A673 (cell line): ENCODE measurements at regions of chr20 and their contacts with region 1.

Region 1: GRCh38 chr20:10673988-10674711 is at the start of gene JAG1:
- DNase-seq: peak; percentile 94
- H3K4me3 ChIP-seq: peak within 1 kb of the TSS; percentile 59
- H3K27ac ChIP-seq: peak within 1 kb of the TSS; percentile 75
- H3K4me1 ChIP-seq: peaks cover 33% of the 10 kb centered on the region
- H3K27me3 ChIP-seq: no peaks in the 10 kb centered on the region
- CTCF ChIP-seq: no peak
- total RNA-seq, gene JAG1: 42.9 and 57.5 TPM in 2 replicates

Region 2: GRCh38 chr20:10357974-10358373 is 316.2 kb before region 1 on chr20:
- CTCF ChIA-PET with region 1: no interaction called
- POLR2A ChIA-PET with region 1: no interaction called
- intact Hi-C with region 1: loop called (anchors 5 kb)
- DNase-seq: peak; percentile 28
- H3K4me3 ChIP-seq: no peak overlapping the region
- H3K27ac ChIP-seq: no peak overlapping the region
- H3K4me1 ChIP-seq: peaks cover 8% of the 10 kb centered on the region
- H3K27me3 ChIP-seq: no peaks in the 10 kb centered on the region
- CTCF ChIP-seq: peak; percentile 73

Region 3: DNA sequence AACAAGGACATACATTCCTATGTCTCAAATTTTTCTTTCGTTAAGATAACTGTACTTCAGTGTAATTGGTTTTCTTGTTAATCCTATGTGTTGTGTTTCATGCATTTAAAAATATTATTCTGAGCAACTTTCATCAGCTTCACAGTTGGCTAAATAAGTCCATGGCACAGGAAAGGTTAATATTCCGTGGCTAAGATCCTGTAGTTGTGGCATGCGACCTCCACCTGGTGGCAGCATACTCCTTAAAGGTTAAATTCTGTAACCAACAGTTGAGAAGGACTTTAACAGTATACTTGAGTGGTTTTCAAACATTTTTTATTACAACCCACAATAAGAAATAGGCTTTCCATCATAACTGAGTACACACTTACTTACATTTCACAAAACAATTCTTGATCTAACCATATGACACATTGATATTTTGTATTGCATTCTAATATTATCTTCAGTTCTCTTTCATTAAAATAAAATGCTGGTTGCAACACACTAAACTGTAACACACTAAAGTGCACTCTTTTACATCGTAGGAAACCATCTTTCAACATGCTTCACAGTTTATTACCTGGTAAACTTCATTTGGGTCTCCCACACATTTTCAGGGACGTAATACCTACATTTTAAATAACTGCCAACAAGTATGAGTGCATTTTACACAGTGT is 120.7 kb before region 1 on chr20:
- CTCF ChIA-PET with region 1: interaction called, 4 read pairs
- POLR2A ChIA-PET with region 1: no interaction called
- intact Hi-C with region 1: loop called (anchors 2 kb)
- DNase-seq: peak; percentile 86
- H3K4me3 ChIP-seq: no peak overlapping the region
- H3K27ac ChIP-seq: no peak overlapping the region
- H3K4me1 ChIP-seq: peaks cover 28% of the 10 kb centered on the region
- H3K27me3 ChIP-seq: no peaks in the 10 kb centered on the region
- CTCF ChIP-seq: peak; percentile 89

Region 4: GRCh38 chr20:11108102-11108810 is 434.1 kb after region 1 on chr20:
- CTCF ChIA-PET with region 1: interaction called, 11 read pairs
- POLR2A ChIA-PET with region 1: no interaction called
- intact Hi-C with region 1: no loop called
- DNase-seq: no peak
- H3K4me3 ChIP-seq: no peak overlapping the region
- H3K27ac ChIP-seq: no peak overlapping the region
- H3K4me1 ChIP-seq: no peaks in the 10 kb centered on the region
- H3K27me3 ChIP-seq: no peaks in the 10 kb centered on the region
- CTCF ChIP-seq: no peak

Region 5: GRCh38 chr20:11274141-11274594 is 600.0 kb after region 1 on chr20:
- CTCF ChIA-PET with region 1: no interaction called
- POLR2A ChIA-PET with region 1: no interaction called
- intact Hi-C with region 1: loop called (anchors 5 kb)
- DNase-seq: peak; percentile 82
- H3K4me3 ChIP-seq: no peak overlapping the region
- H3K27ac ChIP-seq: no peak overlapping the region
- H3K4me1 ChIP-seq: peaks cover 35% of the 10 kb centered on the region
- H3K27me3 ChIP-seq: no peaks in the 10 kb centered on the region
- CTCF ChIP-seq: peak; percentile 81

Region 6: GRCh38 chr20:11544029-11544678 is 870.0 kb after region 1 on chr20:
- CTCF ChIA-PET with region 1: no interaction called
- POLR2A ChIA-PET with region 1: no interaction called
- intact Hi-C with region 1: loop called (anchors 5 kb)
- DNase-seq: peak; percentile 85
- H3K4me3 ChIP-seq: no peak overlapping the region
- H3K27ac ChIP-seq: no peak overlapping the region
- H3K4me1 ChIP-seq: peaks cover 7% of the 10 kb centered on the region
- H3K27me3 ChIP-seq: no peaks in the 10 kb centered on the region
- CTCF ChIP-seq: peak; percentile 65